ENCODE measurements at regions of chr12 and their contacts with region 1.

Region 1: GRCh38 chr12:88993651-88994050 is 358.6 kb downstream of the DUSP6 start:
- DNase-seq: peak; percentile 5
- H3K4me3 ChIP-seq: no peak overlapping the region
- H3K27ac ChIP-seq: no peak overlapping the region
- H3K4me1 ChIP-seq: no peaks in the 10 kb centered on the region
- H3K27me3 ChIP-seq: no peaks in the 10 kb centered on the region
- CTCF ChIP-seq: peak in 3 of 4 experiments; percentile 59 to 76 (median 70)
- POLR2A ChIP-seq: no peak

Region 2: DNA sequence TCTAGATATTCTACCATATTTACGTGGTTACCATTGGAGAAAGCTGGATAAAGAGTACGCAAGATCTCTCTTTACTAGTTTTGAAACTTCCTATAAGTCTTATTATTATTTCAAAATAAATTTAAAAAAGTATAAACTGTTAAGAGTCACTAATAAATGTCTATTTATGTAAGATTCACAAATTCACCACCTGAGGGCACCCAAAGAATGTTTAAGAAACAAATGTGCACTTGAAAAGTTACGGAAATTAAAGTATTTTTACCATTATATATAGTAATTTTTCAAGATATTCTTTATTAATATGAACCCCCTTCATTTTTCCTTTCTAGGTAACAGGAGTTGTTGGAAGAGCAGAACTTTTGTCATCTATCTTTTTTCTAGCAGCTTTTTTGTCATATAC is 839.7 kb before region 1 on chr12:
- intact Hi-C with region 1: loop called (anchors 2 kb)
- DNase-seq: no peak
- H3K4me3 ChIP-seq: no peak overlapping the region
- H3K27ac ChIP-seq: no peak overlapping the region
- H3K4me1 ChIP-seq: no peaks in the 10 kb centered on the region
- H3K27me3 ChIP-seq: no peaks in the 10 kb centered on the region
- CTCF ChIP-seq: peak in 3 of 4 experiments; percentile 19 to 40 (median 40)
- POLR2A ChIP-seq: no peak